ENCODE measurements at regions of chr2 and their contacts with region 1.

Region 1: GRCh38 chr2:56183643-56184499 is at the start of gene CCDC85A:
- DNase-seq: peak; percentile 69 to 77
- H3K4me3 ChIP-seq: peak within 1 kb of the TSS; percentile 60 to 80 (median 65)
- H3K27ac ChIP-seq: peak within 1 kb of the TSS in 1 of 2 donors; percentile 16
- H3K4me1 ChIP-seq: no peaks in the 10 kb centered on the region
- H3K27me3 ChIP-seq: no peaks in the 10 kb centered on the region
- CTCF ChIP-seq: peak; percentile 68 to 79 (median 77)
- POLR2A ChIP-seq: no peak
- total RNA-seq, gene CCDC85A: 3.1 to 11.5 (median 7.5) TPM

Region 2: DNA sequence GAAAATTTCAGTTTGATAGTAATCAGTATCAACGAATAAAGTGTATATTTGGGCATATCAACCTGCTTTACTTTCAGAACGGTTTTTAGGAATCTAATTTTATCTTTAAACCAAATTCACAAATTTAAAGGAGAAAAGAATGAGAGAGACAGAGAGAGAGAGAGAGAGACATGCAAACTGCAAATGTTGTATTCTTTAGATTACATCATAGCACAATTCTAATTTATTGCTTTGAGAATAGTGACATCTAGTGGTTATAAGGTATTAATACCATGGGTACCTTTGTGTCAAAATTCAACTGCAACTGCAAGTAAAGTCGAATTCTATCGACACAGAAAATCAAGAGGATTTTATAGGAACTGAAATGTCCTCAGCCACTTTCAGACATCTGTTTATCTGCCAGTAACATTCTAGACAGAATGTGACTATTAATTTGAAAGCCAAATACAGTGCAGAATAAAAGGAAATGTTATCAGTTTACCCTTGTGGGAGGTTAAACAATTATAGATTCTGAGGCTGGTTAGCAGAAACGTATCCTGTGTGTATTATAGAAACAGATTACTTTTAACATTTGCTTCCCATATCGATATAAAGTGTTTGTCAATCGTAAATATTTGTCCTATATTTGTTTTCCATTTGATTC is 1332.9 kb after region 1 on chr2:
- intact Hi-C with region 1: loop called (anchors 10 kb)
- DNase-seq: no peak
- H3K4me3 ChIP-seq: no peak overlapping the region
- H3K27ac ChIP-seq: no peak overlapping the region
- H3K4me1 ChIP-seq: no peaks in the 10 kb centered on the region
- H3K27me3 ChIP-seq: no peaks in the 10 kb centered on the region
- CTCF ChIP-seq: peak; percentile 17 to 54 (median 48)
- POLR2A ChIP-seq: no peak

Measured in breast epithelium (tissue), 4 donors.